ENCODE measurements at regions of chr15 and their contacts with region 1.

Region 1: GRCh38 chr15:43214592-43215295 is 6.1 kb downstream of the EPB42 start:
- DNase-seq: no peak
- H3K4me3 ChIP-seq: no peak overlapping the region
- H3K27ac ChIP-seq: no peak overlapping the region
- H3K27me3 ChIP-seq: peaks cover 0 to 5% (median 0%) of the 10 kb centered on the region in 45 donors
- CTCF ChIP-seq: no peak

Region 2: GRCh38 chr15:42131826-42132806 is 1082.6 kb before region 1 on chr15:
- intact Hi-C with region 1: no loop called
- DNase-seq: peak in 4 of 10 donors; percentile 16 to 31 (median 24)
- H3K4me3 ChIP-seq: no peak overlapping the region
- H3K27ac ChIP-seq: no peak overlapping the region
- H3K27me3 ChIP-seq: peaks cover 0 to 5% (median 0%) of the 10 kb centered on the region in 45 donors
- CTCF ChIP-seq: no peak

Region 3: DNA sequence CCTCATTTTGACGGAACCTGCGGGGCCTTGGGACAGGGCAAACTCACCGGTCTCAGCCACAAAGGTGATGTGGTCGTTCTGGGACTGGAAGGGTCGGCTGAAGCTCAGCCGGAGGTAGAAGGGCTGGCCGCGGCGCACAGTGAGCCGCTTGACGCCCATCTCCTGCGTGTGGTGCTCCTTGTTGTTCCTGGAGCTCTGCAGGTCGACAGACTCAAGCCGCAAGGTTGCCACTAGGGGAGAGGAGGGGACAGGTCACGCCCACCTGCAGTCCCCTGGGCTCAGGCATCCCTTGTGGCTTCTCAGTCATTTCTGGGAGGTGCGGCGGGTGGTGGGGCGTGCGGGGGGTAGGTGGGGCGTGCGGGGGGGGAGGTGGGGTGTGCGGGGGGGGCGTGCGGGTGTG is 78.7 kb after region 1 on chr15:
- intact Hi-C with region 1: loop called in 1 of 2 experiments (anchors 5 kb)
- DNase-seq: no peak
- H3K4me3 ChIP-seq: no peak overlapping the region
- H3K27ac ChIP-seq: no peak overlapping the region
- H3K27me3 ChIP-seq: peaks cover 0 to 40% (median 11%) of the 10 kb centered on the region in 45 donors
- CTCF ChIP-seq: no peak